ENCODE measurements at regions of chr21 and their contacts with region 1.

Region 1: GRCh38 chr21:14630556-14631069 is 84.5 kb upstream of the SAMSN1 start:
- DNase-seq: no peak
- H3K4me3 Mint-ChIP-seq: no peak overlapping the region
- H3K27ac Mint-ChIP-seq: peak overlapping the region; percentile 78
- H3K4me1 Mint-ChIP-seq: peaks cover 24% of the 10 kb centered on the region
- H3K27me3 Mint-ChIP-seq: no peaks in the 10 kb centered on the region

Region 2: DNA sequence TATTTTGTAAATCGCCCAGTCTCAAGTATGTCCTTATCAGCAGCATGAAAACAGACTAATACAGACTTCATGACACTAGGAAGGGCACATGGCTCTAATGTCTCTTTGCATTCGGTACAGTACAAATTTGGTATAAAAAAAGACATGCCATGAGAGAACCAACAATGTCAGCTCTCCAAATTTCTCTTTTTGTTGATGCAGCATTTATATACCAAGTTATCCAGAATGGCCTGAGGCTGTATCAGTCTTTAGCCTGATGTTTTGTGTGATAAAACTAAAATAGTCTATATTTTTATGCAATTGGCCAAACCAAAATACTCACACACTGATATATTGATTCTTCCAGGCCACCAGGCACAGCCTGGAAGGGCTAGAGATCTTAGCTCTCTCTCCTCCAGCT is 39.8 kb after region 1 on chr21:
- intact Hi-C with region 1: loop called (anchors 2 kb)
- DNase-seq: no peak
- H3K4me3 Mint-ChIP-seq: no peak overlapping the region
- H3K27ac Mint-ChIP-seq: no peak overlapping the region
- H3K4me1 Mint-ChIP-seq: peaks cover 10% of the 10 kb centered on the region
- H3K27me3 Mint-ChIP-seq: no peaks in the 10 kb centered on the region

Region 3: DNA sequence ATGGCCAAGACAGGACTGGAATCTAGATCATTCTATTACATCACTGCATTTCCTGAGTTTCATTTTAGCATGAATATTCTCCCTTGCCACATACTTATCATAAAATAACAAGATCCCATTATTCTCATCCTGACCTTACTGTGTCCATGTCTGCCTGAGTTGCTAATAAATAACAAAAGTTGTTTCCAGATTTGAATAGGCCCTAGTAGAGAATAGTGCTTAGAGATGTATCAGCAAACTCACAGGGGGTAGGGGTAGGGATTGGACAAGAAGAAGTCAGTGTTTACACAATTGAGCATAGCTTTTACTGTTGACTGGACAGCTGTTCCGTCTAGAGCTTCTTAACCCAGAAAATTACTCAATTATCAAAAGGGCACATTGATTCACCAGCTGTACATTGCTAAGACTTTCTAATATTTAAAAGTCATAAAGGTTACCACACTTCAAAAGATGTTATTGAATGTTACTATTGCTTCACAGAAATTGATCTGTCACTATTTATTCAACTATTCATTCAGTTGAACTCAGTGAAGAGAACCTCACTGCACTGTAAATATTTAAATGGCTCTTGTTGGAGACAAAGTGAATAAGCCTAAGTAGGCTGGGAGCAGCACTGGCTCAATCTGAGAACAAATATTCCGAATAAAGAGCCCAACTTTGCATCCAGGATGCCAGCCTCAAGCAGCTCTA is 312.3 kb after region 1 on chr21:
- intact Hi-C with region 1: no loop called
- DNase-seq: no peak
- H3K4me3 Mint-ChIP-seq: no peak overlapping the region
- H3K27ac Mint-ChIP-seq: no peak overlapping the region
- H3K4me1 Mint-ChIP-seq: no peaks in the 10 kb centered on the region
- H3K27me3 Mint-ChIP-seq: peaks cover 2% of the 10 kb centered on the region